Activated T-helper 2 cell treated with anti-CD3 and anti-CD28 coated beads, Interferon-gamma antibody, Interleukin-2, Interleukin-4, amounts not matched to agents 10 μg/mL and 5 μg/mL and 100 μg/mL, durations not matched to agents 14 hours and 24 hours and 36 hours (primary cell): ENCODE measurements at regions of chr1 and their contacts with region 1.

Region 1: GRCh38 chr1:86774305-86775295 is 70.2 kb downstream of the SH3GLB1 start:
- DNase-seq: no peak
- H3K4me3 Mint-ChIP-seq: peak overlapping the region; percentile 9
- H3K27ac Mint-ChIP-seq: peak overlapping the region; percentile 77
- H3K4me1 Mint-ChIP-seq: peaks cover 22% of the 10 kb centered on the region
- H3K27me3 Mint-ChIP-seq: no peaks in the 10 kb centered on the region

Region 2: DNA sequence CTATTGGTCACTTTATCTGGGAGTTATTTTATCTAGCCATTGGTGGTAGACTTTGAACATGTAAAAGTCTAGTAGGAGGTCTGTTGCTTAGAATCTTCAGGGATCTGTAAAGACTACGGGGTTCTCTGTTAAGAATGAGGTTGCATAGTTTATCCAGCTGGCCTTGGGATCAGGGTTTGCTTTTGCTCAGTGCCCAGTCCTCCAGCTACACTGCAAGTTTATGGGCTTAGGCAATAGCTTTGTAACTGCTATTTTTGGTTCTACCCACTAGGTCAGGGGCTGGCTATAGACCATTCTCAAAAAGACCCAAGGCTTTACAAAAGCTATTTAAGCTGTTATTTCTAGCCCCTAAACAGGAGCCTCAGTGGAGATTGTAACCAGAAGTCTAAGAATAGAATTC is 60.4 kb before region 1 on chr1:
- intact Hi-C with region 1: no loop called
- DNase-seq: no peak
- H3K4me3 Mint-ChIP-seq: no peak overlapping the region
- H3K27ac Mint-ChIP-seq: peak overlapping the region; percentile 3
- H3K4me1 Mint-ChIP-seq: peaks cover 24% of the 10 kb centered on the region
- H3K27me3 Mint-ChIP-seq: no peaks in the 10 kb centered on the region

Region 3: GRCh38 chr1:86788300-86789206 is 14.0 kb after region 1 on chr1:
- intact Hi-C with region 1: no loop called
- DNase-seq: no peak
- H3K4me3 Mint-ChIP-seq: no peak overlapping the region
- H3K27ac Mint-ChIP-seq: no peak overlapping the region
- H3K4me1 Mint-ChIP-seq: peaks cover 8% of the 10 kb centered on the region
- H3K27me3 Mint-ChIP-seq: no peaks in the 10 kb centered on the region

Region 4: GRCh38 chr1:86993269-86993985 is 218.8 kb after region 1 on chr1:
- intact Hi-C with region 1: loop called (anchors 10 kb)
- DNase-seq: no peak
- H3K4me3 Mint-ChIP-seq: no peak overlapping the region
- H3K27ac Mint-ChIP-seq: no peak overlapping the region
- H3K4me1 Mint-ChIP-seq: peaks cover 40% of the 10 kb centered on the region
- H3K27me3 Mint-ChIP-seq: no peaks in the 10 kb centered on the region